Right ventricle myocardium inferior (tissue), 1 donor: ENCODE measurements at regions of chr15 and their contacts with region 1.

Region 1: DNA sequence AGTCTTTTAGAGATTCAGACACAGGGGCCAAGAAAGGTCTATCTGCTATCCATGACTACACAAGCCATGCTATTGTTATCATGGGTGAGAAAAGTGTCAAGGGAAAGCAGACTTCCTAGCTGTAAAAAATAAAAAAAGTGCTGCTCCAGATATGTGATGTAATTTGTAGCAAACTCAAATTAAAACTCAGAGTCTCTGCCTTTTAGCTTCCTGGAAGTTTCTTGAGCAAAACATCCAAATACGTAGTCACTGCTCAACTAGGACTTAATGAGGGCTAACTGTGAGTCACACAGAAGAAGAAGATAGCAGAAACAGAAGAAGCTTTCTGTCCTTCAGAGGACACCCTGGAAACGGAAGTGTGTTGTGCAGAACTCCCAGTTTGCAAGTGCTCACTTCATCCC is 393.4 kb upstream of the NR2F2 start:
- DNase-seq: no peak
- ATAC-seq: peak; percentile 50

Region 2: GRCh38 chr15:96097661-96098060 is 160.5 kb after region 1 on chr15:
- intact Hi-C with region 1: no loop called
- DNase-seq: no peak
- ATAC-seq: no peak

Region 3: DNA sequence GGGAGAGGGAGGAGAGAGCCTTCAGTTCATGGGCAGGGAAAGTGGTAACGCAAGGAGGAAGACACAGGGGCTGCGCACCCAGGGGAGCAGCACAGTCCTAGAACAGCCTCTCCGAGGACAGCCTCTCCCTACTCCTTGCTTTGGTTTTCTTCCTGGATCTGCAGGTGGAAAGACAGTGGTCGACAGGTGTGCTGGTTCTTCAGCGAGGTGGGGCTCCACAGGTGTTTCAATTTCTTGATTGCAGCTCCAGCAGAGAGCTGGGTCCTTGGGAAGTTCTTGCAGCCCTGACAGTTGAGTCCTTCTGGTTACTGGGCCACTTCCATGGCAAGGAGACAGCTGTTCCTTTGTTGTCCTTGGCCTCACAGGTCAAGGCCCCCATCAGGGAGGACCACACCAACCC is 172.7 kb after region 1 on chr15:
- intact Hi-C with region 1: loop called (anchors 5 kb)
- DNase-seq: no peak
- ATAC-seq: no peak